ENCODE measurements at regions of chr11 and their contacts with region 1.

Region 1: DNA sequence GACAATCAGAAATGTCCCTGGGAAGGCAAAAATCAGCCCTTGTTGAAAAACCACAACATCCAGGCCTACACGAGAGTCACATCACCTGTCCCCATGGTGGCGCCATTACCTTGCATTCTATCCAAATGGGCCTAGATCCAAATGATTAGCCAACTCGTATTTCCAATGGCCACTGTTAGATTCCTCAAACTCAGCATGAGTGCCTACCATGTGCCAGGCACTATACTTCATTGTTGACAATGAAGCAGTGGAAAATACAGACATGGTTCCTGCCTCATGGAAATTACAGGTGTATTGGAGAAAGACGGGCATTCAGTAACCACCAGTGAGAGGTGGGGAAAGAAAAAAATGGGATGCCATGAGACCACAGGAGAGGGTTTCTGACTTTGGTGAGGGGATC is 29.8 kb upstream of the CREB3L1 start:
- DNase-seq: no peak
- ATAC-seq: peak; percentile 53
- H3K4me3 ChIP-seq: no peak overlapping the region
- H3K27ac ChIP-seq: no peak overlapping the region
- H3K4me1 ChIP-seq: peaks cover 17% of the 10 kb centered on the region
- H3K27me3 ChIP-seq: no peaks in the 10 kb centered on the region
- CTCF ChIP-seq: peak; percentile 63 to 81 (median 68)
- EP300 ChIP-seq: no peak
- POLR2A ChIP-seq: no peak
- RAD21 ChIP-seq: peak; percentile 87

Region 2: GRCh38 chr11:46170797-46171196 is 76.9 kb before region 1 on chr11:
- CTCF ChIA-PET with region 1: no interaction called
- POLR2A ChIA-PET with region 1: no interaction called
- RAD21 ChIA-PET with region 1: no interaction called
- SMC1A ChIA-PET with region 1: no interaction called
- in situ Hi-C with region 1: no loop called
- intact Hi-C with region 1: no loop called
- DNase-seq: no peak
- ATAC-seq: no peak
- H3K4me3 ChIP-seq: no peak overlapping the region
- H3K27ac ChIP-seq: no peak overlapping the region
- H3K4me1 ChIP-seq: no peaks in the 10 kb centered on the region
- H3K27me3 ChIP-seq: no peaks in the 10 kb centered on the region; a peak in 1 of 4 replicates
- CTCF ChIP-seq: no peak
- EP300 ChIP-seq: no peak
- POLR2A ChIP-seq: no peak
- RAD21 ChIP-seq: no peak

Region 3: GRCh38 chr11:46265764-46266163 is 18.1 kb after region 1 on chr11:
- CTCF ChIA-PET with region 1: interaction called, 4 read pairs
- POLR2A ChIA-PET with region 1: interaction called, 3 read pairs
- RAD21 ChIA-PET with region 1: interaction called, 10 read pairs
- SMC1A ChIA-PET with region 1: interaction called, 10 read pairs
- in situ Hi-C with region 1: no loop called
- intact Hi-C with region 1: no loop called
- DNase-seq: peak; percentile 47
- ATAC-seq: peak; percentile 58
- H3K4me3 ChIP-seq: no peak overlapping the region
- H3K27ac ChIP-seq: peak overlapping the region; percentile 61
- H3K4me1 ChIP-seq: peaks cover 33% of the 10 kb centered on the region
- H3K27me3 ChIP-seq: no peaks in the 10 kb centered on the region
- CTCF ChIP-seq: peak in 1 of 3 experiments; percentile 53; a peak in 2 of 6 replicates
- EP300 ChIP-seq: no peak
- POLR2A ChIP-seq: no peak
- RAD21 ChIP-seq: no peak

Region 4: DNA sequence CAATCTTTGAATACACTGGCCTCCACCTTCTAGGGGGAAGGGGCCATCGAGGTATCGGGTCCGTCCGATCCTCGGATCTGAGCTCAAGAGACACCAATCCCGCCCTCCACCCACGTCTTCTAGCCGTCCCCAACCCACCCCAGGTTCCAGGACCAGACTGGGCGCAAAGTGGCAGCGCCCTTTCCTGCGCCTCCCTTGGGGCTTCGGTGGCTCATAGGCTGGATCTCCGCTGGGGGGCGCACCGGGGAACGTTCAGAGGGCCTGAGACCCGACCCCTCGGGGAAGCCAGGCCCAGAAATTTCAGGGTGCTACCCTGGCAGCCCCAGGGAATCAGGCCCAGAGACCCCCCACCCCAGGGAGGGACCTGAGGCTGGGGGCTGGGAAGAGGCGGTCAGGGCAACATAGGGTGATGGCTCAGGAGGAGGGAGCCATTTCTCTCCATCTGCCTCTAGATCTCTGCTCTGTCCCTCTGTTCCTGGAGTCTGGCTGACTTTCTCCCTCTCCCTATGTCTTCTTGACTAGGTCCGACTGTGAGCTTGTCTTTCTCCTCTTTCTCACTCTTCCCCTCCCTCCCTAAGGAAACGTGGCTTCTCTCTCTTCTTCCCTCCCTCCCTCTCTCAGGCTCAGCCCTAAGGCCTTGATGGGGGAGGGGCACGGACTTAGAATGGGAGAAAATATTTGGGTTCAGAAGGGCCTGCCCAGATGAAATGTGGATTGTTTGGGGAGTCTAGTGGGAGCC is 30.9 kb after region 1 on chr11:
- CTCF ChIA-PET with region 1: interaction called, 12 read pairs
- POLR2A ChIA-PET with region 1: interaction called, 3 read pairs
- RAD21 ChIA-PET with region 1: interaction called, 9 read pairs
- SMC1A ChIA-PET with region 1: interaction called, 5 read pairs
- in situ Hi-C with region 1: no loop called
- intact Hi-C with region 1: no loop called
- DNase-seq: no peak
- ATAC-seq: peak; percentile 71
- H3K4me3 ChIP-seq: peak overlapping the region; percentile 70
- H3K27ac ChIP-seq: peak overlapping the region; percentile 42; the same call in 1 of the 2 replicates
- H3K4me1 ChIP-seq: 0 out of 2 replicates have a peak, but pooled peaks cover 5% of the 10 kb centered on the region
- H3K27me3 ChIP-seq: 0 out of 4 replicates have a peak, but pooled peaks cover 2 to 7% of the 10 kb centered on the region in 2 experiments
- CTCF ChIP-seq: peak; percentile 43 to 62 (median 44); a peak in 5 of 6 replicates
- EP300 ChIP-seq: no peak
- POLR2A ChIP-seq: no peak
- RAD21 ChIP-seq: no peak

Region 5: DNA sequence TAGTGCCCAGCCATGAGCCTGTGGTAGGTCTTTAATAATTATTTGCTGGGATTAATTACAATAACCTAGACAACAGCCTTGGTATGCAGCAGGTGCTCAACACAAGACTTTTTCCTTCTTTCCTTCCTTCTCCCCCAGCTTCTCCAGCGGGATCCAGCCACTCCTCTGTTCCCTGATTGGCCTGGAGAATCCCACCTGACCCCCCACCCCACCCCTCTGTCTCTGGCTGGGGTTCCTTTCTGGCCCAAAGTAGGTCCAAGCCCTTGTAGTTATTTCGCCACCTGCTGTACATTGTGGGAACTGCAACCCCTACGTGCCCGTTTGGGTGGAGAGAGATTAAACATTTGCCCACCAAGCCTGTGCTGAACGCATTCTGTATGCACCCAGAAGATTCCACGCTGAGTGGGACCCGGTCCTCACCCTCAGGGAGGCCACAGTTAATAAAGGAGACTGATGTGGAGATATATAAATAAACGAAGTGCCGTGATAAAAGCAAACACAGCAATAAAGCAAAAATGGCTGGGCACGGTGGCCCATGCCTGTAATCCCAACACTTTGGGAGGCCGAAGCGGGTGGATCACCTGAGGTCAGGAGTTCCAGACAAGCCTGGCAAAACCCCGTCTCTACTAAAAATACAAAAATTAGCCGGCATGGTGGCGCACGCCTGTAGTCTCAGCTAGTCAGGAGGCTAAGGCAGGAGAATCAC is 67.5 kb after region 1 on chr11:
- CTCF ChIA-PET with region 1: interaction called, 626 read pairs
- POLR2A ChIA-PET with region 1: interaction called, 4 read pairs
- RAD21 ChIA-PET with region 1: interaction called, 316 read pairs
- SMC1A ChIA-PET with region 1: interaction called, 120 read pairs
- in situ Hi-C with region 1: loop called (anchors 5 kb)
- intact Hi-C with region 1: no loop called
- DNase-seq: no peak
- ATAC-seq: peak; percentile 86
- H3K4me3 ChIP-seq: no peak overlapping the region
- H3K27ac ChIP-seq: no peak overlapping the region
- H3K4me1 ChIP-seq: peaks cover 9% of the 10 kb centered on the region
- H3K27me3 ChIP-seq: no peaks in the 10 kb centered on the region
- CTCF ChIP-seq: peak; percentile 80 to 97 (median 97)
- EP300 ChIP-seq: no peak
- POLR2A ChIP-seq: no peak
- RAD21 ChIP-seq: peak; percentile 78